G401 (cell line): ENCODE measurements at regions of chr19 and their contacts with region 1.

Region 1: GRCh38 chr19:47447470-47448359 is 24.0 kb downstream of the SLC8A2 start:
- DNase-seq: no peak

Region 2: GRCh38 chr19:47336853-47337279 is 110.8 kb before region 1 on chr19:
- in situ Hi-C with region 1: no loop called
- DNase-seq: no peak

Region 3: GRCh38 chr19:47494729-47495128 is 47.0 kb after region 1 on chr19:
- in situ Hi-C with region 1: loop called (anchors 5 kb)
- DNase-seq: no peak

Region 4: DNA sequence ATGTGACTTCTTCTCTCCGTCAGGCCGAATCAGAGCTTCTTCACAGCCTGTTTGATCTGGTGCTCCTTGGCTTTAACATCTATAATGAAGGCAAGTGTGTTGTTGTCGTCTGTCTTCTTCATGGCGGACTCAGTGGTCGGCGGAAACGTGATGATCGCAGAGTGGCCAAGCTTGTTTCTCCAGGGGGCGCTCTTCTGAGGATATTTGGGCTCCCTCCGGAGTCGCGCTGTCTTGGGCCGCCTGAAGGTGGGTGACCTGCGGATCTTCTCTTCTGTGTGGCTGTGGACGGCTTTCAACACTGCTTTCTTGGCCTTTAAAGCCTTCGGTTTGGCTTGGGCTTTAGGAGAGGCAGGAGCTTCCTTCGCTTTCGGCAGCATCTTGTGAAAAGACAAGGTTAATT is 346.8 kb after region 1 on chr19:
- in situ Hi-C with region 1: no loop called
- DNase-seq: no peak